ENCODE measurements at regions of chr1 and their contacts with region 1.

Region 1: GRCh38 chr1:100351095-100351891 is 1.0 kb upstream of the CDC14A start:
- DNase-seq: peak; percentile 67 to 93 (median 82)

Region 2: GRCh38 chr1:100164216-100164615 is 187.1 kb before region 1 on chr1:
- intact Hi-C with region 1: no loop called
- DNase-seq: peak in 1 of 42 donors; percentile 13

Region 3: DNA sequence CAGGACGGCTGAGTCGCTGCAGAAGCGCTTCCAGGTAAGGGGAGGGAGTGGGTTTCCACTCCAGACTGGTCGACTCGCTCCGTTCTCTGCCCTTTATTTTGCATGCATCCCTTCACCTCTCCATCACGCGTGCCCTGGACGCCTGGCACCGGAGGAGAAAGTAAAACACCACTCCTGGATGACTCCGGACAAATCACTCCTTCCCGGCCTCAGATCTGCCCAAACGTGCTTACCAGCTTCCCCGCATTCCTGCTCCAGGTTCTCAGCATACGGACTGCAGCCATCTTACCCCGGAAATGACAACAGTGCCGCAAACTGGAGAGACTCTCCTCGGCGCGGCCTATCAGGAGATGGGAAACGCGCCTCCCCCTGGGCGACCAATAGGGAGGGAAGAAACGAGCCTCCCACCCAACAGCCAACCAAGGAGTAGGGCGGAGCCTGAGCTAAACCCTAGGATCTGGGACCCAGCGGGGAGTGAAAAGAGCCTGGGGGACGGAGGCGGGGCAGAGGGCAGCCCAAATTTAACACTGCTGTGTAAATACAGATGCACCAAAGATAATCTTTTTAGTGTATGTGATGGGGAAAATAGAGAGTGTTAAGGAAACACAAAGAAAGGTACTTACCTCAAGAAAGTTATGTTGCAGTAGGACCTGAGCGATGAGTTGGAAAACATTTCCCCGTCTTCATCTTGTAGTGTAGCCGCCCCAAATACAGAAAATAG is 101.6 kb before region 1 on chr1 and contains the start of gene DBT:
- intact Hi-C with region 1: loop called (anchors 5 kb)
- DNase-seq: peak; percentile 92 to 99 (median 98)

Region 4: GRCh38 chr1:100265931-100266740 is 85.2 kb before region 1 on chr1 and contains the start of gene RTCA:
- intact Hi-C with region 1: loop called (anchors 5 kb)
- DNase-seq: peak; percentile 91 to 98 (median 96)

Measured in head of caudate nucleus (tissue), 42 donors.